Pancreas (tissue), 10 donors: ENCODE measurements at regions of chr3 and their contacts with region 1.

Region 1: GRCh38 chr3:123328851-123329635 is 119.8 kb downstream of the ADCY5 start:
- DNase-seq: peak; percentile 64 to 95 (median 84)
- ATAC-seq: peak; percentile 75 to 92 (median 90)
- H3K4me3 ChIP-seq: no peak overlapping the region
- H3K27ac ChIP-seq: no peak overlapping the region
- H3K4me1 ChIP-seq: peaks cover 13 to 16% (median 14%) of the 10 kb centered on the region in 3 donors
- H3K27me3 ChIP-seq: no peaks in the 10 kb centered on the region
- CTCF ChIP-seq: peak; percentile 91 to 97 (median 93)

Region 2: DNA sequence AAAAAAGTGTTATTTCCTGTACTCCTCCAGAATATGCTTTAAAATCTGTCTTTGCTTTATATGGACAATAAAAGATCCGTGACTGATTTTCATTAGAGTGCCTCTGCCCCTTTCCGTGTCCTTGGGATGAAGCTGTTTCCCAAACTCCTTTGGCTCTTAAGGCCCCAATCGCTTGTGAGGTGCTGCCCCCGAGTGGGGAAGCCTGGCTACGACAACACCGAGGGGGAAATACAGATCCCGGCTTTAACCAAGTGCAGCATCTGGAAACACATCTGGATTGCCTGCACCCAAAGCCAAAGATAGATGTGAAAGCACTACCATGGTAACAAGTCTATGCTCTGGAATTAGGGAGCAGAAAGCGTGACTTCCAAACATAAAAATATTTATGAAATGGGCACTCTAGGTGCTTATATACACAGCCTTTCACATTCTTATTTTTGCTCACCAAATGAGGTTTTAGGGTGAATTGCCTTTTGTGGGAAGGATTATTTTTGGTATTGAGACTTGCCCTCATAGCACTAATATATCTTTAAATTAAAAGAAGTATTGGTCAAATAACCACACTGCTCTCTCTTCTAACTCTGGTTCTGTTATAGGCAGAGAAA is 160.5 kb after region 1 on chr3:
- intact Hi-C with region 1: loop called (anchors 2 to 10 kb)
- DNase-seq: peak in 4 of 6 donors; percentile 29 to 83 (median 68)
- ATAC-seq: peak; percentile 73 to 95 (median 92)
- H3K4me3 ChIP-seq: no peak overlapping the region
- H3K27ac ChIP-seq: no peak overlapping the region
- H3K4me1 ChIP-seq: no peaks in the 10 kb centered on the region
- H3K27me3 ChIP-seq: no peaks in the 10 kb centered on the region
- CTCF ChIP-seq: peak; percentile 70 to 77 (median 76)

Region 3: GRCh38 chr3:123559040-123559861 is 230.2 kb after region 1 on chr3:
- intact Hi-C with region 1: loop called in 2 of 3 experiments (anchors 5 to 10 kb)
- DNase-seq: no peak
- ATAC-seq: peak in 3 of 4 donors; percentile 74 to 77 (median 77)
- H3K4me3 ChIP-seq: no peak overlapping the region
- H3K27ac ChIP-seq: no peak overlapping the region
- H3K4me1 ChIP-seq: no peaks in the 10 kb centered on the region
- H3K27me3 ChIP-seq: no peaks in the 10 kb centered on the region
- CTCF ChIP-seq: peak; percentile 40 to 77 (median 56)

Region 4: GRCh38 chr3:123568034-123568433 is 239.0 kb after region 1 on chr3:
- intact Hi-C with region 1: loop called in 1 of 3 experiments (anchors 10 kb)
- DNase-seq: no peak
- ATAC-seq: no peak
- H3K4me3 ChIP-seq: no peak overlapping the region
- H3K27ac ChIP-seq: no peak overlapping the region
- H3K4me1 ChIP-seq: peaks cover 0 to 7% (median 5%) of the 10 kb centered on the region in 3 donors
- H3K27me3 ChIP-seq: no peaks in the 10 kb centered on the region
- CTCF ChIP-seq: no peak